ENCODE measurements at regions of chr5 and their contacts with region 1.

Region 1: DNA sequence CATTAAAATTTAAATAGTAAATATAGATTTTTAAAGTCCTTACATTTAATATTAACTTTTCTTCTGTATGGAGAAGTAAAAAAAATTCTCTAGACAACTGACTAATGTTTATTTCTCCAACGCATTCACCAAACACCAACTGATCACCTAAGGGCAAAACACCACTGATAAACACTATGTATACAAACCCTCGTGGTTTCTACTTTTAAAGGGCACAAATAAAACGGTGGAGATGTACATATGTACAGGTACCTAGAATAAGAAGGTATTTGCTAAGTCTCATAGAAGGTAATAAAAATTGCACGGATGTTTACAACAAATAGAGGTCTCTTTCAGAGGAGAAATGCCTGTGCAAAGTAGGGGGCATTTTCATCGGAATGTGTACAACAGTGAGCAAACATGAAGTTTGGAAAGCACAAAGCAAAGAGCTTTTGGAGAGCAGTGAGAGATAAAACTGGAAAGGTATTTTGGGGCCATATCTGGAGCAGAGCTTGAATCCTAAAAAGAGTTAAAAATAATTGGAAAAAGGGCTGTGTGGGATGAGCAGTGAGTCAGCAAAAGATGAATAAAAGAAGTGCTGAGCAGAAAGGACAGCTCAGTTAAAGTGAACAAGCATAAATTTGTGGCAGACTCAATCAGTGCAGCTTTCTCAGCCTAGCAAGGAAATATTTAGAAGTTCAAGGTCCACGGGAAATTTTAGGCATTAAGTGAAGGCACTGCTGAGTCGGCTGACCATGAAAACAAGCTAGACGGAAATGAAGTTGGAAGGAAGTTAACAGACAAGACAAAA is 160.0 kb downstream of the TMEM161B start:
- DNase-seq: peak; percentile 0
- H3K4me3 ChIP-seq: no peak overlapping the region
- H3K27ac ChIP-seq: no peak overlapping the region
- H3K4me1 ChIP-seq: no peaks in the 10 kb centered on the region
- H3K27me3 ChIP-seq: no peaks in the 10 kb centered on the region
- CTCF ChIP-seq: no peak

Region 2: DNA sequence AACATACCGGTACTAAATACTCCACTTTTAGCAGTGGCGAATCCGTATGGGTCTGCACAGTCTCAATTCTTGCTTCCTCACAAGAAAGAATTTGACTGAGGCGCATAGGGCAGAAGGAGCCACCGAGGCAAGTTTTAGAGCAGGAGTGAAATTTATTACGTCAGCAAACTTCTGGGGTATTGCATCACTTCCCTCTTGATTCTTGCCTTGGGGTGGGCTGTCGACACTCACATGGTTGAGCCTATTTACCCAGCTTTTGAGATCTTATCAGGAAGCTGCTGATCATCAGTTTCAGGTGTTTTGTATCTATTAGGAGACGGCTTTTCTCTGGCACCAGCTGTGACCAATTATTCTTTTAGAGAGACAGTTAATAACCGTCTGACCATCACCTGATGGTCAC is 584.5 kb before region 1 on chr5:
- CTCF ChIA-PET with region 1: interaction called, 14 read pairs
- POLR2A ChIA-PET with region 1: no interaction called
- intact Hi-C with region 1: no loop called
- DNase-seq: no peak
- H3K4me3 ChIP-seq: no peak overlapping the region
- H3K27ac ChIP-seq: no peak overlapping the region
- H3K4me1 ChIP-seq: no peaks in the 10 kb centered on the region
- H3K27me3 ChIP-seq: no peaks in the 10 kb centered on the region
- CTCF ChIP-seq: no peak

Region 3: GRCh38 chr5:87885758-87886157 is 222.9 kb before region 1 on chr5:
- CTCF ChIA-PET with region 1: no interaction called
- POLR2A ChIA-PET with region 1: no interaction called
- intact Hi-C with region 1: no loop called
- DNase-seq: peak; percentile 12
- H3K4me3 ChIP-seq: no peak overlapping the region
- H3K27ac ChIP-seq: no peak overlapping the region
- H3K4me1 ChIP-seq: no peaks in the 10 kb centered on the region
- H3K27me3 ChIP-seq: no peaks in the 10 kb centered on the region
- CTCF ChIP-seq: 0 out of 2 replicates have a peak, but pooled peaks have one; percentile 11